Left ventricle myocardium superior (tissue), 1 donor: ENCODE measurements at regions of chr1 and their contacts with region 1.

Region 1: DNA sequence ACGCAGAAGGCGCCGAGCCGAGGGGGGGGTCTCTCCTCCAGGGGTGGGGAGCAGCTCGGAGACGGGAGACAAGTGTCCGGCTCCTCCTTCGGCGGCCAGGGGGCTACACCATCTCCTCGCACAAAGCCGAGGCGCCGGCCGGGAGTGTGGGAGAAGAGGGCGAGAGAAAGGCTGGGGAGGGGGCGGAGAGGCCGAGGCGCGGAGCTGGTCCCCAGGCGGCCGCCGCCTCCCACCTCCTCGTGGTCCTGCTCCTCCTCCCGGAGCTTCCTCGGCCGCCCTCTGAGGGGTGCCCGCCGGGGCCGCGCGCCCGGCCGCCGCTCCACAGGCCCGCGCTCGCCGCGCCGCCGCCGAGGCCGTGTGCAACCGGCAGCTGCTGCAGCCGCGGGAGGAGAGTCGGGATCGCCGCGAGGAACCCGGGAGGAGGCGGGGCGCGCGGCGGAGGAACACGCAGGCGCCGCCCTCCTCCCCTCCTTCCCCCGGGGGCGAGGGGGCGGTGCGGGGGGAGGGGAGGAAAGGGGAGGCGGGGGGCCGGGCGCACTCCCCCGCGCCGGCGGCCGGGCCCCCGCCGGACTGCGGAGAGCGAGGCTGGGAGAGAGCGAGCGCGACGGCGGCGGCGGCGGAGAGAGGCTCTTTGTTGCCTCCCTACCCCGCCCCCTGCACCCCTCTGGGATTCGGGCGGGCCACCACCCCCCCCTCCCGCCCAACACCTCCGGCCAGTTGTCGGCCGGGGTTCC is at the start of gene ENAH:
- DNase-seq: peak; percentile 92
- ATAC-seq: peak; percentile 89
- total RNA-seq, gene ENAH: 90.1 TPM

Region 2: GRCh38 chr1:225413708-225414375 is 239.1 kb before region 1 on chr1:
- intact Hi-C with region 1: no loop called
- DNase-seq: no peak
- ATAC-seq: no peak

Region 3: DNA sequence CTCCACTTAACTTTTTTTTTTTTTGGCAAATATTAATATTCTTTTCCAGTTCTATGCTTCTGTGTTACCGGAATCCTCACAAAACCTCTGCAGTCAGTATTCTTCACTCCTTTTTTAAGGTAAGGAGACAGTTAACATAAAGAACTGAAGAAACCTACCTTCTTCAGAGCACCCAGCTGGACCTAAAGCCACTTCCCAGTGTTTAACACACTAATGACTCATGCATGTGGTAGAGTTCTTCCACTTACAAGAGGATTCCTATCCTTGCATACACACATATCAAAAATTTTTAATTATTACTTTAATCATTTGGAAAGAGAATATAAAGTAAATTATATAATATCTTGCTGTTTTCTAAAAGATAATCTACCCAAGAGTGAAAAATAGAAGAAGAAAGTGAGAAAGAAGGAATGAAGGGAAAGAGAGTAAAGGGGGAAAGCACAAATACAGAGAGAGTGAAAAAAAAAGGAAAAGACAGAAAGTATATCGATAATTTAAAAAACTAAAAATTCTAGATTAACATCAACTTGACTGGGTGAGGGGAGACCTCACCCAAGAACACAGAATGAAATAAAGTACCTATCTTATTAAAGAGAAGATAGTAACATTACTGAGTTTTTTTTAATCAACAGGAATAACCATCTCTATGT is 54.8 kb before region 1 on chr1:
- intact Hi-C with region 1: loop called (anchors 10 kb)
- DNase-seq: no peak
- ATAC-seq: no peak

Region 4: DNA sequence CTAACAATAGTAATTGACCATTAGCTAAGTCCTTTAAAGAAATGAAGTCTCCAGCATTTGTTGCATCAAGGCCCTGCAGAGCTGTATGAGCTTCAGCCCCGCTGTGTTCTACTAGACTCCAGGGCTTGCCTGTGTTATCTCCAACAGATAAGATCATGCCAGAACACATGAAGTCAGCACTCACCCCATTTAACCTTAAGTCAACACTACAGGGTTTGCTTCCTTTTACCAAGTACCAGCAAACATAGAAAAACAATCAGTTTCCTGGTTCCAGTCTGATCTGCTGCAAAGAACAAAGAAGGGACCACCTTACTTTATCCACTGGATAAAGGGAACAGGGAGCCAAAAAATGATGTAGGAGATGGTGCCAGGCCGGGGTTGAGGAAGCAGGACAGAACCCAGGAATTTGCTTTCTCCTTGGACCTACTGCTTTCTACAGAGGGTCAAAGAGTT is 41.3 kb after region 1 on chr1:
- intact Hi-C with region 1: no loop called
- DNase-seq: peak; percentile 59
- ATAC-seq: peak; percentile 97

Region 5: DNA sequence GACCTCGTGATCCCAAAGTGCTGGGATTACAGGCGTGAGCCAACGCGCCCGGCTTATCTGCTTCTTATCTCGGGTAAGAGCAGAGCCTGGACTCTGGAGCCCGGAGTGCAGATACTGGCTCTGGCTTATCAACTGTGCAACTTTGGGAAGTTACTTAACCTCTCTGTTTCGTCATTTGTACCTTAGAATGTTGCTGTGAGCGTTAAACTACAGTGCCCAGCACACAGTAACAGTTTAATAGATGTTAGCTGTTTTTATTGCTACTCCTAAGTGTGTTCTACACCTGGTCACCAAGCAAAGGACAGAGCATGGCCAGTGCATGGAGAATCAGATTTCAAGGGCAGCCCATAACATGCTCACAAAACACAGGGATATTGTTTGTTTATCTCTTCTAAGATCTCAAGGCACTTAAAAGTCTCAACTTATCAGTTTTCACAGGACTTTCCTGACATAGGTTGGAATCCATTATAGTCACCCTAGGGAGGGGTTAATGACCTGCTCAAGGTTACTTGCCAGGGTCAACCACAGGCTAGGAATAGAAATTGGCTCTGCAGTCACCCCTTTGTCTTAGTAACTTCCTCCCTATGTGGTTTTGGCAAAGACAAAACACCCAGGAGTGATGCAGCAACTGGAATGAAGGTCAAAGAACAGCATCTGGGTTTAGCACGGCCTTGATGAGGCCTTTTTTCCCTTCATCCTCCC is 102.2 kb after region 1 on chr1:
- intact Hi-C with region 1: loop called (anchors 10 kb)
- DNase-seq: peak; percentile 52
- ATAC-seq: peak; percentile 79

Region 6: GRCh38 chr1:225950905-225951497 is 298.1 kb after region 1 on chr1:
- intact Hi-C with region 1: no loop called
- DNase-seq: no peak
- ATAC-seq: peak; percentile 15